IMR-90 (cell line): ENCODE measurements at regions of chr3 and their contacts with region 1.

Region 1: DNA sequence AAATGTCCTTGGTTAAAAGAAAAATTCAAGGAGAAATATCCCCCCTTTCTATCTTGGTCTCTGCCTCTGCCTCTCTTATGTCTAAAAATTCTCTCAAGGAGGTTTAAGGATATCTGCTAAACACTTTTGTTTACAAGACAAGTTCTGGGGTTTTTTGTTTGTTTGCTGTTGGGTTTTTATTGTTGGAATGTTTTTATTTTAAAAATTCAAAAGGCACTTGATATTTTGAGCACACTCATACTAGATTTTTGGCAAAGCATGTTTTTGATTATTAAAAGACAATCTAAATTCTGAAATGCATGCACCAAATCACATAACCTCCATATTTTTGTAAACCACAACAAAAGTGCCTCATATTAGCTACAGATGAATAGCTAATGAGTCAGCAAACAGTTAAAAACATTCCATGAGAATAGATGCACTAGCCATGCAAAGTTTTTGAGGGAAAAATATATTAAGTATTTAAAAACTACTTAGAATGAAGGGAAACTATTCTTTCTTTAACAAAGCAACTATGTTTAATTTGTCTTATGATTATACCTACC is 84.6 kb downstream of the ZBTB20 start:
- DNase-seq: peak; percentile 52
- ATAC-seq: peak; percentile 44
- H3K4me3 ChIP-seq: no peak overlapping the region
- H3K27ac ChIP-seq: no peak overlapping the region
- H3K4me1 ChIP-seq: peaks cover 3% of the 10 kb centered on the region; the same call in 1 of the 2 replicates
- H3K27me3 ChIP-seq: no peaks in the 10 kb centered on the region
- CTCF ChIP-seq: no peak
- POLR2A ChIP-seq: no peak
- RAD21 ChIP-seq: no peak

Region 2: DNA sequence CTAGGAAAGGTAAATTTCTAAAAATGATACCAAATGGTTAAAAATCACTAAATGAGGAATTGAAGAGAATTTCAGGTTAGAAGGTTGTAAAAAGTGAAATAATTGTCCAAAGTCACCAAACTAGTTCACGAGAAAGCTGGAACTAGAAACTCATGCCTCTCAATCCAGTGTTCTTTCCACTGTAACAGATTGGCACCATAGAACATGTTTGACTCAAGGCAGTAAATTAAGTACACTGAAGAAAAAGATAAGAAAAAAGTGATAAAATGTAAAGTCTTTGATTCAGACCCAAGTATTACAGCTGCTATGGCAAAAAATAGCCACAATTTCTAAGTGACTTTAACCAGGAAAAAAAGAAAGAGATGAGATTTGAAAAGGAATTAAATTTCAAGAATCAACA is 58.1 kb after region 1 on chr3:
- CTCF ChIA-PET with region 1: no interaction called
- POLR2A ChIA-PET with region 1: no interaction called
- dilution Hi-C with region 1: no loop called
- in situ Hi-C with region 1: no loop called
- intact Hi-C with region 1: loop called (anchors 5 kb)
- DNase-seq: no peak
- ATAC-seq: no peak
- H3K4me3 ChIP-seq: no peak overlapping the region
- H3K27ac ChIP-seq: no peak overlapping the region
- H3K4me1 ChIP-seq: no peaks in the 10 kb centered on the region
- H3K27me3 ChIP-seq: no peaks in the 10 kb centered on the region
- CTCF ChIP-seq: no peak
- POLR2A ChIP-seq: no peak
- RAD21 ChIP-seq: no peak